ENCODE measurements at regions of chr20 and their contacts with region 1.

Region 1: GRCh38 chr20:63309261-63310071 is 16.5 kb downstream of the COL20A1 start:
- DNase-seq: no peak
- H3K4me3 ChIP-seq: no peak overlapping the region
- H3K27ac ChIP-seq: no peak overlapping the region
- H3K4me1 ChIP-seq: no peaks in the 10 kb centered on the region
- H3K27me3 ChIP-seq: no peaks in the 10 kb centered on the region
- CTCF ChIP-seq: peak; percentile 63 to 66 (median 66)
- POLR2A ChIP-seq: no peak

Region 2: GRCh38 chr20:62616728-62617621 is 692.5 kb before region 1 on chr20:
- intact Hi-C with region 1: no loop called
- DNase-seq: no peak
- H3K4me3 ChIP-seq: no peak overlapping the region
- H3K27ac ChIP-seq: peak overlapping the region; percentile 22
- H3K4me1 ChIP-seq: peaks cover 27% of the 10 kb centered on the region
- H3K27me3 ChIP-seq: no peaks in the 10 kb centered on the region
- CTCF ChIP-seq: peak; percentile 71 to 80 (median 78)
- POLR2A ChIP-seq: no peak

Region 3: DNA sequence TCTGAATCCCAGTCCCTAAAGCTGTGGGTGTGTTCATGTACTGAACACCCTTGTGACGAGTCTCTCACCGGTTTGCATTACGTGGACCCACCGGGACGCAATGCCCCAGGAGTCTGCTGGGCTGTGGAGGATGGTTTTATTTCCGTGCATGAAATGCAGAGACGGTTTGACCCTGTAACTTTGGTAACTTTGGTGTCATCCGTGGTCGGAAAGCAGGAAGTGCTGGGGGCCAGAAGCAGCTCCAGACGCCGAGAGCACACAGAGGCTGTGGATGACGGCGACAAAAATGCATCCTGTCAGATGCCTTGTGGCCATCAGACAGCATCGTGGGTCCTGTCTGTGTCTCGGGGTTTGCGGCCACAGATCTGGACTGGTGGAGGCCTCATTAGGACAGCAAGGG is 309.9 kb before region 1 on chr20:
- intact Hi-C with region 1: no loop called
- DNase-seq: no peak
- H3K4me3 ChIP-seq: no peak overlapping the region
- H3K27ac ChIP-seq: no peak overlapping the region
- H3K4me1 ChIP-seq: no peaks in the 10 kb centered on the region
- H3K27me3 ChIP-seq: peaks cover under 1% of the 10 kb centered on the region
- CTCF ChIP-seq: no peak
- POLR2A ChIP-seq: no peak

Region 4: GRCh38 chr20:63377256-63377941 is 67.9 kb after region 1 on chr20:
- intact Hi-C with region 1: loop called (anchors 5 kb)
- DNase-seq: no peak
- H3K4me3 ChIP-seq: no peak overlapping the region
- H3K27ac ChIP-seq: no peak overlapping the region
- H3K4me1 ChIP-seq: no peaks in the 10 kb centered on the region
- H3K27me3 ChIP-seq: no peaks in the 10 kb centered on the region
- CTCF ChIP-seq: no peak
- POLR2A ChIP-seq: no peak

Region 5: GRCh38 chr20:63696306-63696627 is 386.8 kb after region 1 on chr20:
- intact Hi-C with region 1: no loop called
- DNase-seq: no peak
- H3K4me3 ChIP-seq: peak overlapping the region in 1 of 2 donors; percentile 13
- H3K27ac ChIP-seq: no peak overlapping the region
- H3K4me1 ChIP-seq: peaks cover 43% of the 10 kb centered on the region
- H3K27me3 ChIP-seq: no peaks in the 10 kb centered on the region
- CTCF ChIP-seq: no peak
- POLR2A ChIP-seq: no peak

Measured in vagina (tissue), 2 donors.